BJ (cell line): ENCODE measurements at regions of chr14 and their contacts with region 1.

Region 1: GRCh38 chr14:57692671-57693070 is 173.2 kb downstream of the SLC35F4 start:
- DNase-seq: peak; percentile 8
- H3K4me3 ChIP-seq: no peak overlapping the region
- H3K27me3 ChIP-seq: no peaks in the 10 kb centered on the region; the same call in 1 of the 2 replicates
- CTCF ChIP-seq: peak; percentile 61

Region 2: GRCh38 chr14:57871459-57872080 is 178.9 kb after region 1 on chr14:
- CTCF ChIA-PET with region 1: interaction called, 46 read pairs
- POLR2A ChIA-PET with region 1: no interaction called
- DNase-seq: no peak
- H3K4me3 ChIP-seq: no peak overlapping the region
- H3K27me3 ChIP-seq: peaks cover 1% of the 10 kb centered on the region; the same call in 1 of the 2 replicates
- CTCF ChIP-seq: peak; percentile 70

Region 3: GRCh38 chr14:58072288-58073071 is 379.8 kb after region 1 on chr14:
- CTCF ChIA-PET with region 1: interaction called, 12 read pairs
- POLR2A ChIA-PET with region 1: no interaction called
- DNase-seq: no peak
- H3K4me3 ChIP-seq: no peak overlapping the region
- H3K27me3 ChIP-seq: peaks cover 2% of the 10 kb centered on the region; the same call in 1 of the 2 replicates
- CTCF ChIP-seq: peak; percentile 70